CD8-positive, alpha-beta memory T cell (primary cell): ENCODE measurements at regions of chr17 and their contacts with region 1.

Region 1: GRCh38 chr17:8409966-8410864 is 12.6 kb upstream of the RNF222 start:
- DNase-seq: peak; percentile 61 to 82 (median 76)
- H3K4me3 ChIP-seq: no peak overlapping the region
- H3K4me3 Mint-ChIP-seq: peak overlapping the region in 1 of 7 donors; percentile 8
- H3K27ac ChIP-seq: no peak overlapping the region
- H3K27ac Mint-ChIP-seq: peak overlapping the region in 1 of 8 donors; percentile 3
- H3K4me1 ChIP-seq: peaks cover 13% of the 10 kb centered on the region
- H3K4me1 Mint-ChIP-seq: peaks cover 9 to 19% (median 17%) of the 10 kb centered on the region in 3 donors
- H3K27me3 ChIP-seq: no peaks in the 10 kb centered on the region
- H3K27me3 Mint-ChIP-seq: peaks cover 4 to 15% of the 10 kb centered on the region in 2 donors

Region 2: DNA sequence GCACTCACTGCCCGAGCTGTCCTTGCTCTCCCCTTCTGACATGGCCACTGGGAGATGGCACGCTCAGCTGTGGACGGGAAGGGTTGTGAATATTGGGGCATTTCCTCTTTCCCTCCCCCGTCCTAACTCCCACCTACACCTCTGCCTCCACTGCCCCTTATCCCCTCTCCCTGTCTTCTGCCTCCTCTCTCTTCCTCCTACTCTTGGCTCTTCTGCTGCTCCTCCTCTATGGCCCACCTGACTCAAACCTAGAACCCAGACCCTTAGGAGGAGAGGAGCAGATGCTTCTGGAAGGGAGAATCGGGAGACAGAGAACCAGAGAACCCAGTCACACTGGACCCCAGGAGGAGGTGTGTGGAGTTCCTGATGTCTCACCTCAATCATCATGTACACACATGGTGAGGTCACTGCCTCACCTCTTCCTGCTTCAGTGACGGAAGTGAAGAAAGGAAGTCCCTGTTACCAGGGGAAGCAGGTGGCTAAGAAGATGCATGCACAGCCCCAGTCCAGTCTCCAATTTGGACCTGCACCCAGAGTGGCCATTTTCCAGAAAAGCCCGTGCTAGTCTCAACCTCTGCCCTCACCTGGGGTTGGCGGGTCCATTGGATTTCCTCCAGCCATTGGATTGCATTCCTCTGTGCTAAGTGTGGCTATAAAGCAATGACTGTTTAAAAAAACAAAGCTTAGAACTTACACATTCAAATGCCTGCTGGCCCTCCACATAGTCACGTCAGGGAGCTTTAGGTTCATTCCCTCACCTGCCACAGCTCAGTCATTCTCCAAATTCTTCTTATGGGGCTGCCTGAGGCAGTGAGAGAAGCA is 16.6 kb before region 1 on chr17:
- CTCF ChIA-PET with region 1: interaction called, 16 read pairs
- POLR2A ChIA-PET with region 1: no interaction called
- DNase-seq: peak in 4 of 5 donors; percentile 33 to 69 (median 58)
- H3K4me3 ChIP-seq: no peak overlapping the region
- H3K4me3 Mint-ChIP-seq: peak overlapping the region in 5 of 7 donors; percentile 34 to 83 (median 64)
- H3K27ac ChIP-seq: peak overlapping the region; percentile 13
- H3K27ac Mint-ChIP-seq: peak overlapping the region; percentile 71 to 100 (median 93)
- H3K4me1 ChIP-seq: peaks cover 15% of the 10 kb centered on the region
- H3K4me1 Mint-ChIP-seq: peaks cover 15 to 27% (median 20%) of the 10 kb centered on the region in 3 donors
- H3K27me3 ChIP-seq: peaks cover 5% of the 10 kb centered on the region
- H3K27me3 Mint-ChIP-seq: peaks cover 8 to 15% of the 10 kb centered on the region in 2 donors

Region 3: DNA sequence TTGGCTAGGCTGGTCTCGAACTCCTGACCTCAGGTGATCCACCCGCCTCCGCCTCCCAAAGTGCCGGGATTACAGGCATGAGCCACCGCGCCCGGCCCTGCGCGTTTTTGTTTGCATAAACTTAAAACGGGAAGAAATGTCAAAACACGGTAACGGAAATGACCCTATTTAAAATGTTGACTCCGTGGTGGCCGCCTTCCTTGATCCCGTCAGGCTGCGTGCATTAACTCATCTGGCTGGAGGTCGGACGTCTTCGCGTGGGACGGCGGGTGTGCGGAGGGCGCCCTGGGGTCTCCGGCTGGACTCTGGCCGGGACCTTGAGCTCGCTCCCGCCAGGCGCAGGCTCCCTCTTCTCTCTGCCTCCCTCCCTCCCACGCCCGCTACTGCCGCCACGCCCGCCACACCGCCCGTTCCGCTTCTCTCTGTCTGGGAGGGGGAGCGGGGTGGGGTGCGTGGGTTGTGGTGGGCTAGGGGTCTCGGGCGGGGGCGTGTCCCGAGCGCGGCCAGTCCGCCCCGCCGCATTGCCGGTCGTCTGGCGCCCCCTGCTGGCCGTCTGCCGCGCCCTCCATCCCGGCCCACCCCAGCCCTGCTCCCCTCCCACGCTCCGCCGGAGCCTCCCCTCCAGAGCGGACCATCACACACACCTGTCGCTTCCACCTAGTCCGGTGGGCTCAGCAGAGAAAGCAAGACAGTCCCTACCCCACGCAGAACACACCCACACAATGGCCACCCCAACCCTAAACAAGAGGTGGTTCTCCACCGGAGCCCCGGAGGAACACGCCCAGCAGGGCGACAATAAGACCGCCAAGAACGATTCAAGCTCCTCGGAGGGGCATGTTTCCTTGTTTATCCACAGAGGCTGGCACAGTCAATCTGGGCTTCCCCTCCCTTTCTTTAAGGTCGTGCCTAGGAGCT is 335.6 kb after region 1 on chr17:
- CTCF ChIA-PET with region 1: interaction called, 15 read pairs
- POLR2A ChIA-PET with region 1: no interaction called
- DNase-seq: peak; percentile 70 to 85 (median 77)
- H3K4me3 ChIP-seq: peak overlapping the region; percentile 75
- H3K4me3 Mint-ChIP-seq: peak overlapping the region; percentile 88 to 95 (median 92)
- H3K27ac ChIP-seq: peak overlapping the region; percentile 65
- H3K27ac Mint-ChIP-seq: peak overlapping the region; percentile 91 to 99 (median 94)
- H3K4me1 ChIP-seq: peaks cover 13% of the 10 kb centered on the region
- H3K4me1 Mint-ChIP-seq: peaks cover 9 to 19% (median 12%) of the 10 kb centered on the region in 3 donors
- H3K27me3 ChIP-seq: no peaks in the 10 kb centered on the region
- H3K27me3 Mint-ChIP-seq: peaks cover 0 to 2% of the 10 kb centered on the region in 2 donors

Region 4: DNA sequence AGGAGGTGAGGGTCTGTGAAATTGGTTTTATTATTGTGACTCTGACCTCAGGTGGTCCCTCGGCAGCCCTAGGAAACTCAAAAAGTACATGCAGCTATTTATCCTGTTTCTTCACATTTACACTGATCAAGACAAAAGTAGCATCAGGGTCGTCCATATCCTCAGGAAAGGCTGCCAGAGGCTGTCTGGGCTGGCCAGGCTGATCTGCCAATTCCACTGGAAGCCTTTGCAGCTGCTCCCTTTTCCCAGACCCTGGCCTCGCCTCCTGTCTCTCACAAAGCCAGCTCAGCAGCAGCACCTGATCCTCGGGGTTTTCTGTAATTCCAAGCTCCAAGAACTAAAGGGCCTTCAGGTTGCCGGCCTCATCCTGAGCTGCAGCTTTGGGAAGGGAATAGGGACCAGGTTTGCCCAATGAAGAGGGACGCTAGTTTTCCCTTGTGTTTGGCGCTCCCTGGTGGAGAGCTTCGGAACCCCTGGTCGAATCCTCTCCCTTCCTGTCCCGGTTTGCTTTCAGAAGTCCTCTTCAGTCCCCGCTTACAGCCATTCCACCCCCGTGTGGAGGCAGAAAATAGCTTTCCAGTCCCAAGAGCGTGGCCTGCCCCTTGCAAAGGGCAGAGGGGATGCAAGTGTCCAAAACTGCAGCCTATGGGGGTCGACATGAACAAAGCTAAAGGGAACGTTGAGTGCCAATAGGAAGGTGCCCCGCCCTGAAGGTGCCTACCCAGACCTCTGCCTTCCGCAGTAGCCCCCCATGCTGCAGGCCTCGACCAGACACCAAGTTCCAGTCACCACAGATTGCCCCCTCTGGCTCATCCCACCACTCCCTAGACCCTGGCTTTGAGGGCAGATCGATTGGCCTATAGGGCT is 375.6 kb after region 1 on chr17:
- CTCF ChIA-PET with region 1: no interaction called
- POLR2A ChIA-PET with region 1: interaction called, 12 read pairs
- DNase-seq: peak; percentile 19 to 59 (median 46)
- H3K4me3 ChIP-seq: no peak overlapping the region
- H3K4me3 Mint-ChIP-seq: no peak overlapping the region
- H3K27ac ChIP-seq: no peak overlapping the region
- H3K27ac Mint-ChIP-seq: no peak overlapping the region
- H3K4me1 ChIP-seq: no peaks in the 10 kb centered on the region
- H3K4me1 Mint-ChIP-seq: peaks cover 0 to 2% (median 0%) of the 10 kb centered on the region in 3 donors
- H3K27me3 ChIP-seq: no peaks in the 10 kb centered on the region
- H3K27me3 Mint-ChIP-seq: peaks cover 0 to 2% of the 10 kb centered on the region in 2 donors